ENCODE measurements at regions of chr2 and their contacts with region 1.

Region 1: GRCh38 chr2:9494096-9494495 is 19.7 kb downstream of the IAH1 start:
- DNase-seq: no peak
- ATAC-seq: no peak
- H3K4me3 ChIP-seq: no peak overlapping the region
- H3K27ac ChIP-seq: no peak overlapping the region
- H3K4me1 ChIP-seq: peaks cover 0 to 8% (median 2%) of the 10 kb centered on the region in 12 donors
- H3K27me3 ChIP-seq: no peaks in the 10 kb centered on the region
- CTCF ChIP-seq: no peak
- POLR2A ChIP-seq: no peak

Region 2: DNA sequence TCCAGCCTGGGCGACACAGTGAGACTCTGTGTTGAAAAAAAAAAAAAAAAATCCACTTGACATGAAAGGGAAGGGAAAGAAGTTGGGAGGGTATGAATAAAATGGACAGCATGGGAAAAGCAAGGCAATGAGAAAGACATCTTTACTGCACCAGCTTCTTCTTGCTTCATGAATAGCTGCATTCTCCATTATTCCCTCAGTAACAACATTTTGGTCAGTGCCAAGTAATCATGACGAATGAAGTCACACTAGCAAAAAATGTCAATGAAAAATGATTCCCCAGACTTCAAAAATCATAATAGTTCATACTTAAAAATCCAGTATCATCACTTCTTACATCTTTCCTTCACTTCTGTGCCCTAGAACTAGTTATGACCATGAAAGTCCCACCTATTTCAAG is 31.2 kb after region 1 on chr2:
- intact Hi-C with region 1: loop called in 1 of 10 experiments (anchors 5 kb)
- DNase-seq: no peak
- ATAC-seq: no peak
- H3K4me3 ChIP-seq: no peak overlapping the region
- H3K27ac ChIP-seq: no peak overlapping the region
- H3K4me1 ChIP-seq: no peaks in the 10 kb centered on the region
- H3K27me3 ChIP-seq: no peaks in the 10 kb centered on the region
- CTCF ChIP-seq: no peak
- POLR2A ChIP-seq: no peak

Region 3: DNA sequence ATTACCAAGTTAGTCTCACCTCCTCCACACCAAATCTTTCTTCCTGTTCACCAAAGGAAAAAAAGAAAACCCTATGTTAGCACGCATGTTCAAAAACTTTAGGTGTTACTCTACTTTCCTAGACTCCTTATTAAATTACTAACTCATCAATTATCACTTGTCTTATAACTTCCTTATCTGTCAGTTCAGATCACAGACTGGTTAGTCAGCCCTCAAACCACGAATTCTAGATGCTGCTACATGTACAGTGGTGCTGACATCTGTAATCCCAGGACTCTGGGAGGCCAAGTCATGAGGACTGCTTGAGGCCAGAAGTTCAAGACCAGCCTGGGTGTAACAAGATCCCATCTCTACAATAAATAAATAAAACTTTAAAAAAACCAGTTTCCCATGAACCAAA is 133.2 kb after region 1 on chr2:
- intact Hi-C with region 1: no loop called
- DNase-seq: no peak
- ATAC-seq: no peak
- H3K4me3 ChIP-seq: peak overlapping the region in 3 of 12 donors; percentile 81 to 94 (median 85)
- H3K27ac ChIP-seq: no peak overlapping the region
- H3K4me1 ChIP-seq: peaks cover 0 to 82% (median 62%) of the 10 kb centered on the region in 12 donors
- H3K27me3 ChIP-seq: no peaks in the 10 kb centered on the region
- CTCF ChIP-seq: no peak
- POLR2A ChIP-seq: no peak

Measured in heart left ventricle (tissue), 16 donors.